Cardiac septum (tissue), 1 donor: ENCODE measurements at regions of chr6 and their contacts with region 1.

Region 1: GRCh38 chr6:11353921-11354389 is 121.5 kb upstream of the NEDD9 start:
- DNase-seq: no peak

Region 2: GRCh38 chr6:11172501-11173332 is 181.2 kb before region 1 on chr6:
- intact Hi-C with region 1: loop called (anchors 10 kb)
- DNase-seq: peak; percentile 84

Region 3: DNA sequence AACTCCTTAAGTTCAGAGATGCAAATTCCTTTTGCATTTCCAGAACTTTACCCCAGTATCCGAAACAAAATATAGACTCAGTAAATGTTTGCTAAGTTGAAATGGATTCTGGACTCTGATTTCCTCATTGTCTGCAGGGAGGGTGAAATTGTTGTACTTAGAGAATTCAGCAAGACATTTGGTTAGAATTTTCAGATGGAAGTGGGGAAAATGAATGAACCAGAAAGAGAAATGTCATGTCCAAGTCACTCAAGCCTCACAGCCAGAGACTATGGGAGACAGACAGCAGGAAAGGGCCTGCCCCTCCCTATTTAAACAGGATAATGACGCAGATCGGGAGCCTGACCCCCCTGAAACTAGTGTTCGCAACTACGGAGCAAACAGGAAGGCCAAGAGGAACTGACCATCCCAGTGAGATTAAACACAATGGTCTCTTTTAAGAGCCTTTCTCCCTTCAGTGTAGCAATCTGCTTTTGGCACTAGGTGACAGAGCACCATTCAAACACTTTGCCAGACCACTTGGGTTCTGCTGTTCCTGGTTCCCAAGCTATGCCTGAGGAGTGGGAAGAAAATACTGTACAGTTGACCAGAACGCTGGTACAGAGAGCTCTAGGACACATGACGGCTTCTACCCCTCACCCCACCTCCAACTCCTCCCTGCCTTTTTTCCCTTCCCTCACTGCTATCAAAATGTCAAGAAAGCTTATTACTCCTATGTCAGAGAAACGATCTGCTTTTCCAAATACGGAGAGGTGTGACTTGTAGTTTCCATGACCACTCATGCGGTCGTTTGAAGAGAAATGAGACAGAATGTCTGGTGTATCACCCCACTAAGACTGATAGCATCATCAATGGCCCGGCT is 135.2 kb before region 1 on chr6:
- intact Hi-C with region 1: loop called (anchors 5 kb)
- DNase-seq: peak; percentile 84

Region 4: GRCh38 chr6:11317885-11318771 is 35.8 kb before region 1 on chr6:
- intact Hi-C with region 1: loop called (anchors 2 kb)
- DNase-seq: no peak